Activated CD4-positive, alpha-beta memory T cell treated with anti-CD3 and anti-CD28 coated beads for 36 hours (primary cell): ENCODE measurements at regions of chr5 and their contacts with region 1.

Region 1: DNA sequence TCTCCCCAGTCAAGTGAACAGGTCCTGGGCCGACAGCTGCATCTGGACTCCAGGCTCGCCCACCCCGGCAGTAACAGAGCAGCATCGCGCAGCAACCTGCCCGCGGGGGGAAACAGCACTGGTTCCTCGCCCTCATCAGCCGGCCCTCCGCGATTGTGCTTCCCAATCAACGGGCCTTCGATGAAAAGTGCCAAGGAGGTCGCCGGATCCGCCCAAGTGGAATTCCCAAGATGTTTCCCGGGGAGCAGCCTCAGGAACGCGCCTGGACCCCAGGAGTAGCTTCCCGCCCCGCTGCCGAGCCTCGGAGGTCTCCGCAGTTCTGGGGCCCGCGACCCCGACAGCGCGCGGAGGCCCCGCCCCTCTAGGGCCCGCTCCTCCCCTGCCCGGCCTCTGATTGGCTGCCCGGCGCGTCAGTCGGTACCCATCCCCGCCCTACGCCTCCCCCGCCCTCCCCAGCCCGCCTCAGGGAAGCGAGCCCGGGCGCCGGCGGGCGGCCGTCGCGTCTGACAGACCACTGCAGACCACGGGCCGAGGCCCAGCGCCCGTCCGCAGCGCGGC is at the start of gene OTULINL:
- DNase-seq: peak; percentile 91
- H3K4me3 Mint-ChIP-seq: peak within 1 kb of the TSS; percentile 77
- H3K27ac Mint-ChIP-seq: no peak within 1 kb of the TSS
- H3K4me1 Mint-ChIP-seq: peaks cover 27% of the 10 kb centered on the region
- H3K27me3 Mint-ChIP-seq: peaks cover 9% of the 10 kb centered on the region
- total RNA-seq, gene OTULINL: 12.2 to 12.3 TPM

Region 2: GRCh38 chr5:14142827-14143548 is 438.4 kb before region 1 on chr5 and contains the start of gene TRIO:
- CTCF ChIA-PET with region 1: no interaction called
- POLR2A ChIA-PET with region 1: no interaction called
- intact Hi-C with region 1: loop called (anchors 5 kb)
- DNase-seq: peak; percentile 80
- H3K4me3 Mint-ChIP-seq: peak within 1 kb of the TSS; percentile 75
- H3K27ac Mint-ChIP-seq: peak within 1 kb of the TSS; percentile 5
- H3K4me1 Mint-ChIP-seq: peaks cover 12% of the 10 kb centered on the region
- H3K27me3 Mint-ChIP-seq: peaks cover 44% of the 10 kb centered on the region
- total RNA-seq, gene TRIO: 6.0 to 6.6 TPM

Region 3: GRCh38 chr5:14399054-14399692 is 182.2 kb before region 1 on chr5:
- CTCF ChIA-PET with region 1: interaction called, 7 read pairs
- POLR2A ChIA-PET with region 1: no interaction called
- intact Hi-C with region 1: loop called (anchors 2 kb)
- DNase-seq: no peak
- H3K4me3 Mint-ChIP-seq: no peak overlapping the region
- H3K27ac Mint-ChIP-seq: no peak overlapping the region
- H3K4me1 Mint-ChIP-seq: peaks cover 13% of the 10 kb centered on the region
- H3K27me3 Mint-ChIP-seq: no peaks in the 10 kb centered on the region

Region 4: DNA sequence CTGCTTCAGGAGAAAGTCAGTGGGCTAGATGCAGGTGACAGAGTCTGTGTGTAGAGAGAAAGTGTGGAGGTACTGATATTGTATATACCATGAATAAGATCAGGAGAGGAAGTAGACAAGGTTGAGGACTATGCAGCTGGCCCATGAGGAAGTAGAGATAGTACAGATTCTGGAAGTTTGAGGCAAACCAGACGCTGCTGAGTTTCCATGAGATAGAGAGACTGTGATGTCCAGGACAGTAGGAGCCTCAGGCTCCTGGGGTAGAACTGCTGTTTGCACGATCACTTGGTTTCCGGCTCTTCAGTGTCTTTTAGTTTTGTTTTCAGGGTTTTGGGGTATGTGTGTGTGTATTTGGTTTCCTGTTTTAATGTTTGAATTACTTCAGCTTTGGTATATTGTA is 13.8 kb after region 1 on chr5:
- CTCF ChIA-PET with region 1: interaction called, 6 read pairs
- POLR2A ChIA-PET with region 1: interaction called, 17 read pairs
- intact Hi-C with region 1: loop called (anchors 1 kb)
- DNase-seq: peak; percentile 50
- H3K4me3 Mint-ChIP-seq: peak overlapping the region; percentile 63
- H3K27ac Mint-ChIP-seq: peak overlapping the region; percentile 70
- H3K4me1 Mint-ChIP-seq: peaks cover 84% of the 10 kb centered on the region
- H3K27me3 Mint-ChIP-seq: no peaks in the 10 kb centered on the region

Region 5: GRCh38 chr5:14650052-14650451 is 68.6 kb after region 1 on chr5:
- CTCF ChIA-PET with region 1: interaction called, 17 read pairs
- POLR2A ChIA-PET with region 1: interaction called, 4 read pairs
- intact Hi-C with region 1: loop called (anchors 5 kb)
- DNase-seq: no peak
- H3K4me3 Mint-ChIP-seq: no peak overlapping the region
- H3K27ac Mint-ChIP-seq: no peak overlapping the region
- H3K4me1 Mint-ChIP-seq: no peaks in the 10 kb centered on the region
- H3K27me3 Mint-ChIP-seq: peaks cover 9% of the 10 kb centered on the region

Region 6: GRCh38 chr5:14809369-14810155 is 228.2 kb after region 1 on chr5:
- CTCF ChIA-PET with region 1: no interaction called
- POLR2A ChIA-PET with region 1: no interaction called
- intact Hi-C with region 1: no loop called
- DNase-seq: peak; percentile 90
- H3K4me3 Mint-ChIP-seq: peak overlapping the region; percentile 74
- H3K27ac Mint-ChIP-seq: peak overlapping the region; percentile 80
- H3K4me1 Mint-ChIP-seq: peaks cover 57% of the 10 kb centered on the region
- H3K27me3 Mint-ChIP-seq: no peaks in the 10 kb centered on the region

Region 7: DNA sequence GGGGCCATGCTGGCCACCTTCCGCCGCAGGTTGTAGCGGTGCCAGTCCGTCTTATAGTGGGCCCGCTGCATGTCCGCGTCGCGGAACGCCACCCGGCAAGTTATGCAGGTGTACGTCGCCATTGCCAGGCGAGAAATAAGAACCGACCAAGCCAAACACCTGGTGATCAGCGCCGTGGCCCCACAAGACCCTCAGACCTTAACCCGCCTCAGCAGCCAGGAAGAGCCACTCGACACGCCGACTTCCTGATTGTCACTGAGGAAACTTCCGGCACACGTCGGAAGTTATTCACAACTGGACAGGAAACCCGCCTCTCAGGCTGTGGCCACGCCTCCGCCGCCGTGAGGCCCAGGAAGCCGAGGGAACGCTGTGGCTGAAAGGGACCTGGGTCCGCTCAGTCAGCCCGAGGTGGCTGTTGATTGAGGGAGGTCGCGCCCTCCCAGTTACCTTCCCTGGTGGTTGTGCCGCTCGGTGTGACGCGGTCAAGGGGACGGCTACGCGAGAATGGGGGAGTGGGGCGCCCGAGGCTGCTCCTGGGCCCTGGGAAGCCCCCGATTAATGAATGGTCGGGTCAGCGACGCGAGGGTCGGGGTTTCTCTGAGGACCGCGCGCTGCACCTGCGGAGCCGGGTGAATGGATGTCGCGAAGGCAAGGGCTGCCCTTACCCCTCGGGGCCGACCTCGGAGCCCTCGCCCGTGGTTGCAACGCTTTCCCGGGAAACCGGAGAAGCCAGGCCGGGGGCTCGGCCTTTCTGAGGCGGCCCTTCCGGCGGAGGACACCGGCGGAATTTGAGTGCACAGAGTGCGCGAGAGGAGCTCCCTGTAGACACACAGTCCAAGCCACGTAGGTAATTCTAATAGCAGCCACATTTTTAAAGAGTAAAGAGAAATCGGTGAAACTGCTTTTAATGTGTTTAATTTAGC is 1884.4 kb after region 1 on chr5 and contains the start of gene ZNF622:
- CTCF ChIA-PET with region 1: no interaction called
- POLR2A ChIA-PET with region 1: no interaction called
- intact Hi-C with region 1: loop called (anchors 5 kb)
- DNase-seq: peak; percentile 92
- H3K4me3 Mint-ChIP-seq: peak within 1 kb of the TSS; percentile 98
- H3K27ac Mint-ChIP-seq: peak within 1 kb of the TSS; percentile 96
- H3K4me1 Mint-ChIP-seq: peaks cover 74% of the 10 kb centered on the region
- H3K27me3 Mint-ChIP-seq: no peaks in the 10 kb centered on the region
- total RNA-seq, gene ZNF622: 35.6 to 35.9 TPM